ENCODE measurements at regions of chr5 and their contacts with region 1.

Region 1: GRCh38 chr5:7762267-7762666 is 88.7 kb downstream of the CFAP90 start:
- DNase-seq: no peak
- H3K4me3 ChIP-seq: no peak overlapping the region
- H3K27ac ChIP-seq: no peak overlapping the region
- H3K4me1 ChIP-seq: peaks cover 0 to 9% of the 10 kb centered on the region in 2 donors
- H3K27me3 ChIP-seq: no peaks in the 10 kb centered on the region
- CTCF ChIP-seq: no peak

Region 2: GRCh38 chr5:7412409-7412808 is 349.9 kb before region 1 on chr5:
- intact Hi-C with region 1: no loop called
- DNase-seq: no peak
- H3K4me3 ChIP-seq: no peak overlapping the region
- H3K27ac ChIP-seq: no peak overlapping the region
- H3K4me1 ChIP-seq: no peaks in the 10 kb centered on the region
- H3K27me3 ChIP-seq: no peaks in the 10 kb centered on the region
- CTCF ChIP-seq: no peak

Region 3: GRCh38 chr5:7815892-7816534 is 53.7 kb after region 1 on chr5:
- intact Hi-C with region 1: loop called (anchors 5 kb)
- DNase-seq: peak; percentile 22 to 90
- H3K4me3 ChIP-seq: peak overlapping the region in 1 of 2 donors; percentile 34
- H3K27ac ChIP-seq: no peak overlapping the region
- H3K4me1 ChIP-seq: no peaks in the 10 kb centered on the region
- H3K27me3 ChIP-seq: no peaks in the 10 kb centered on the region
- CTCF ChIP-seq: peak; percentile 69 to 90 (median 80)

Region 4: GRCh38 chr5:7827610-7828009 is 65.3 kb after region 1 on chr5:
- intact Hi-C with region 1: no loop called
- DNase-seq: no peak
- H3K4me3 ChIP-seq: no peak overlapping the region
- H3K27ac ChIP-seq: no peak overlapping the region
- H3K4me1 ChIP-seq: no peaks in the 10 kb centered on the region
- H3K27me3 ChIP-seq: no peaks in the 10 kb centered on the region
- CTCF ChIP-seq: no peak

Region 5: DNA sequence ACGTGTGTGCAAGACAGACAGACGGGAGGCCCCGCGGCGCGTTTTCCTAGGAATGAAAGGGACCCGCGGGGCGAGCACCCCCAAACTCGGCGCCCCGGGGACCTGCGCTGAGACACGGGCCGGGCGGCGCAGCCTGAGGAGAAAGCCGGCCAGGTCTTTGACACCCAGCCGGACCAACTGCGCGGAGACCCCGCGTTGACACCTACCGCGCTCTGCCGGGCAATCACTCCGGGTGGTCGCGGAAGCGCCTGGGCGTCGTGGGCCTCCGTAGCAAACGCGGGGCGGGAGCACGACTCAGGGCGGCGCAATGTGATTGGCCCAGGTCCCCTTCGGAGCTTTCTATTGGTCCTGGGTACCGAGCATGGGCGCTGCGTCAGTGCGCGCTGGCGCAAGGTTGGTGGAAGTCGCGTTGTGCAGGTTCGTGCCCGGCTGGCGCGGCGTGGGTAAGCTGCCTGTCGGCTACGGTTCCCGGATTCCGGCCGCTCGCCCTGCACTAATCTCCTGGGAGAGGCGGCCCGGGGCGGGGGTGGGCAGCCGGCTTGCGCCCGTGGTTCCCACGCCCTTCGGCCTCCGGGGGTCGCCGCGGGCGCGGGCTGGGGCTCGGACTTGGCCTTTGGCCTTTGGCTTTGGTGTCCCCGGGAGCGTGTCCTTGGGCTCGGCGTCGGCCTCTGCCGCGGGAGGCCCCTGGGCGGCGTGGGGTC is 106.7 kb after region 1 on chr5 and contains the starts of genes FASTKD3 and MTRR:
- intact Hi-C with region 1: loop called (anchors 5 kb)
- DNase-seq: peak; percentile 70 to 95
- H3K4me3 ChIP-seq: peak within 1 kb of the TSS; percentile 51 to 95
- H3K27ac ChIP-seq: peak within 1 kb of the TSS; percentile 56 to 85
- H3K4me1 ChIP-seq: peaks cover 0 to 6% of the 10 kb centered on the region in 2 donors
- H3K27me3 ChIP-seq: no peaks in the 10 kb centered on the region
- CTCF ChIP-seq: no peak
- total RNA-seq, gene FASTKD3: not detected
- total RNA-seq, gene MTRR: 15.0 TPM